ENCODE measurements at regions of chr15 and their contacts with region 1.

Region 1: GRCh38 chr15:59528965-59529402 is 82.6 kb upstream of the GCNT3 start:
- DNase-seq: peak; percentile 83
- H3K4me3 ChIP-seq: no peak overlapping the region
- H3K27ac ChIP-seq: no peak overlapping the region
- H3K4me1 ChIP-seq: no peaks in the 10 kb centered on the region
- H3K27me3 ChIP-seq: no peaks in the 10 kb centered on the region
- CTCF ChIP-seq: peak; percentile 68 to 84

Region 2: GRCh38 chr15:58077427-58077826 is 1451.6 kb before region 1 on chr15:
- CTCF ChIA-PET with region 1: no interaction called
- dilution Hi-C with region 1: no loop called
- in situ Hi-C with region 1: no loop called
- intact Hi-C with region 1: loop called (anchors 2 kb)
- DNase-seq: peak; percentile 32
- H3K4me3 ChIP-seq: no peak overlapping the region
- H3K27ac ChIP-seq: no peak overlapping the region
- H3K4me1 ChIP-seq: no peaks in the 10 kb centered on the region
- H3K27me3 ChIP-seq: no peaks in the 10 kb centered on the region
- CTCF ChIP-seq: peak; percentile 30 to 64

Region 3: DNA sequence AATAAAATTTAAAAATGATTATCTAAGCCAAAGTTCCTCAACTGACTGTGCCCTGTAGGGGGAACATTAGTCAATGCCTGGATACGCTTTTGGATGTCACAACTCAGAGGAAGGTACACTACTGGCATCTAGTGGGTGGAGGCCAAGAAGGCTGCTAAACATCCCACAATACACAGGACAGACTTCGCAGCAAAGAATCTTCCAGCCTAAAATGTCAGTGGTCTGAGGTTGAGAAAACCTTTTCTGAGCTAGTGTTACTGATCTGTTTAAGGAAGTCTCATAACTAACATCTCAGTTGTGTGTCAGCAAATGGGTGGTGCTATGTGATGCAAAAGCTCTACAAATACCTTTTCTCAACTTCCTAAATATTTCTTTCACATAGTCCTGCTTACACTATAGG is 343.3 kb before region 1 on chr15:
- CTCF ChIA-PET with region 1: no interaction called
- dilution Hi-C with region 1: no loop called
- in situ Hi-C with region 1: no loop called
- intact Hi-C with region 1: no loop called
- DNase-seq: no peak
- H3K4me3 ChIP-seq: no peak overlapping the region
- H3K27ac ChIP-seq: no peak overlapping the region
- H3K4me1 ChIP-seq: peaks cover 5% of the 10 kb centered on the region
- H3K27me3 ChIP-seq: no peaks in the 10 kb centered on the region
- CTCF ChIP-seq: peak; percentile 17 to 23

Region 4: GRCh38 chr15:59501597-59501996 is 27.4 kb before region 1 on chr15:
- CTCF ChIA-PET with region 1: interaction called, 3 read pairs
- dilution Hi-C with region 1: no loop called
- in situ Hi-C with region 1: no loop called
- intact Hi-C with region 1: loop called (anchors 2 kb)
- DNase-seq: peak; percentile 76
- H3K4me3 ChIP-seq: no peak overlapping the region
- H3K27ac ChIP-seq: no peak overlapping the region
- H3K4me1 ChIP-seq: no peaks in the 10 kb centered on the region
- H3K27me3 ChIP-seq: no peaks in the 10 kb centered on the region
- CTCF ChIP-seq: peak; percentile 83

Region 5: DNA sequence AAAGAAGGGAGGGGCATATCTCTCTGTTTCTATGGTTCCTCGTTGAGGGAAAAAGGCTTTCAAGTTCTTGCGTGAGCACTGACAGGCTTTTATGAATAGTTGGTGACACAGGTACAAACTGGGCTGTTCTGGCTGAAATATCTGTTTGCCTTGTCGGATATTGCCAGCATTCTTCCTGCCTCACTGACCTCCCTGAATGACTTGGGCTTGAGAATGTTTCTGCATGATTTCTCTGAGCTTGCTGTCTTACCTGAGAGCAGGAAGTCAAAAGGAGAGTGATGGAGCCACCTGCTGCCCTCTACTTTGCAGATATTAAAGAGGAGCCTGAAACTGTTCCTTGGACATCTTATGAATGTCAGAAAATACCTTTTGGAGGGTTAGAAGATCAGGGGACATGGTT is 87.4 kb after region 1 on chr15:
- CTCF ChIA-PET with region 1: interaction called, 6 read pairs
- dilution Hi-C with region 1: no loop called
- in situ Hi-C with region 1: loop called (anchors 10 kb)
- intact Hi-C with region 1: loop called (anchors 1 kb)
- DNase-seq: no peak
- H3K4me3 ChIP-seq: no peak overlapping the region
- H3K27ac ChIP-seq: no peak overlapping the region
- H3K4me1 ChIP-seq: peaks cover 7% of the 10 kb centered on the region
- H3K27me3 ChIP-seq: no peaks in the 10 kb centered on the region
- CTCF ChIP-seq: peak in 1 of 2 donors; percentile 42

Region 6: GRCh38 chr15:59632714-59633113 is 103.7 kb after region 1 on chr15:
- CTCF ChIA-PET with region 1: interaction called, 6 read pairs
- dilution Hi-C with region 1: no loop called
- in situ Hi-C with region 1: loop called (anchors 10 kb)
- intact Hi-C with region 1: loop called (anchors 1 kb)
- DNase-seq: no peak
- H3K4me3 ChIP-seq: no peak overlapping the region
- H3K27ac ChIP-seq: no peak overlapping the region
- H3K4me1 ChIP-seq: no peaks in the 10 kb centered on the region
- H3K27me3 ChIP-seq: no peaks in the 10 kb centered on the region
- CTCF ChIP-seq: peak; percentile 43 to 67